Mammary epithelial cell (primary cell): ENCODE measurements at regions of chr5 and their contacts with region 1.

Region 1: GRCh38 chr5:73498057-73499008 is at the start of gene BTF3:
- DNase-seq: peak; percentile 96
- H3K4me3 ChIP-seq: peak within 1 kb of the TSS; percentile 90 to 97 (median 92)
- H3K27ac ChIP-seq: peak within 1 kb of the TSS; percentile 95
- H3K4me1 ChIP-seq: peaks cover 8% of the 10 kb centered on the region
- H3K27me3 ChIP-seq: no peaks in the 10 kb centered on the region
- CTCF ChIP-seq: no peak
- total RNA-seq, gene BTF3: 365 to 681 TPM

Region 2: DNA sequence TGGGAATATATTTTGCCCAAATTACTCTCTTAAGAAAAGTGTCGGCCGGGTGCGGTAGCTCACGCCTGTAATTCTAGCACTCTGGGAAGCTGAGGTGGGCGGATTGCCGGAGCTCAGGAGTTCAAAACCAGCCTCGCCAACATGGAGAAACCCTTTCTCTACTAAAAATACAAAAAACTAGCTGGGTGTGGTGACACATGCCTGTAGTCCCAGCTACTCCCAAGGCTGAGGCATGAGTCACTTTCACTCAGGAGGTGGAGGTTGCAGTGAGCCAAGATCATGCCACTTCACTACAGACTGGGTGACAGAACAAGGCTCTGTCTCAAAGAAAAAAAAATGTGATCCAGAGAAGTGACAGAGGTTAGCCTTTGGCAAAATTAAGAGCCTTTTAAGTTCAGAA is 404.4 kb before region 1 on chr5:
- CTCF ChIA-PET with region 1: no interaction called
- dilution Hi-C with region 1: loop called (anchors 25 kb)
- in situ Hi-C with region 1: loop called in 1 of 2 experiments (anchors 25 kb)
- intact Hi-C with region 1: no loop called
- DNase-seq: peak; percentile 79
- H3K4me3 ChIP-seq: no peak overlapping the region
- H3K27ac ChIP-seq: no peak overlapping the region
- H3K4me1 ChIP-seq: peaks cover 11% of the 10 kb centered on the region
- H3K27me3 ChIP-seq: no peaks in the 10 kb centered on the region
- CTCF ChIP-seq: no peak

Region 3: GRCh38 chr5:73419465-73420390 is 78.6 kb before region 1 on chr5:
- CTCF ChIA-PET with region 1: no interaction called
- dilution Hi-C with region 1: no loop called
- in situ Hi-C with region 1: no loop called
- intact Hi-C with region 1: no loop called
- DNase-seq: no peak
- H3K4me3 ChIP-seq: peak overlapping the region in 2 of 3 experiments; percentile 22 to 31
- H3K27ac ChIP-seq: no peak overlapping the region
- H3K4me1 ChIP-seq: peaks cover 16% of the 10 kb centered on the region
- H3K27me3 ChIP-seq: no peaks in the 10 kb centered on the region
- CTCF ChIP-seq: no peak

Region 4: DNA sequence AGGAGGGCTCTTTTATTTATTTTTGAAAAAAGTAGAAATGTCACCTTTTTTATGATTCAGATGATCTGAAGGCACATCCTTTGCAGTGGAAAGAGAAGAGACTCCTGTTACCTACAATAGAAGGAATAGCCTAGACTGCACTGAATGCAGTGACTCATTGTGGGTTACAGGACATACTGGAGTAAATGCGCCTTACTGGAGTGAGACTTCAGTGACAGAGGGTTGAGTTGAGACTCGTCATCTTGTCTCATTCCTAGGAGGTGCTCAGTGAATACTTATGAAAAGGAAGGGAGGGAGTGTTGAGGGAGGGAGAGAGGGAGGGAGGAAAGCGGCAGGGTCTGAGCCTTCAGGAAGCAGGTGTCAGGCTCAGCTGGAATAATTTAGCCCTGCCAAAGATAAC is 41.9 kb after region 1 on chr5:
- CTCF ChIA-PET with region 1: no interaction called
- dilution Hi-C with region 1: no loop called
- in situ Hi-C with region 1: no loop called
- intact Hi-C with region 1: no loop called
- DNase-seq: peak; percentile 94
- H3K4me3 ChIP-seq: no peak overlapping the region
- H3K27ac ChIP-seq: no peak overlapping the region
- H3K4me1 ChIP-seq: peaks cover 45% of the 10 kb centered on the region
- H3K27me3 ChIP-seq: no peaks in the 10 kb centered on the region
- CTCF ChIP-seq: no peak